Vagina (tissue), 2 donors: ENCODE measurements at regions of chr12 and their contacts with region 1.

Region 1: DNA sequence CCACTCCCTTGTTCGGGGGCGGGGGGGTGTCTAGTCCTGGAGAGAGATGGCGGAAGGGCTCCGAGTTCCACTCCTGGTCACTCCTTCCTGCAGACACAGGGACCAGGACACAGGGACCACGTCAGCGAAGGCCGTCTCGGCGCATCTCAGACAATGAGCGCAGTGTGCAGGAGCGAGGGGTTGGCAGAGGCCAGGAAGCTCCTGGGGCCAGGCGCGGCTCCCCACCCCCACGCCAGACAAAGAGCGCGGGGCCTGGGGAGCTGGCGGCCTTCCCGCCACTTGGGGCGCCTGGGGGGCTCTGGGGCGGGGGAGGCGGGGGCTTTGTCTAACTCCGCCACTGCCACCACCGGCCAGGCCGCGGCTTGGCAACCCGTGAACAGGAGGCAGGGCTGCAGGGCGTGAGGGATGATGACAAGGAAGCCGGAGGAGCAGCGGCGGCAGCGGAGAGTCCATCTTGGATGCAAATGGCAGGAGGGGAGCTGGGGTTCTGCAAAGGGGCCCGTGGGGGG is 2.2 kb downstream of the CDK2AP1 start:
- DNase-seq: no peak
- H3K4me3 ChIP-seq: peak overlapping the region; percentile 85 to 92
- H3K27ac ChIP-seq: peak overlapping the region; percentile 88
- H3K4me1 ChIP-seq: peaks cover 57% of the 10 kb centered on the region
- H3K27me3 ChIP-seq: no peaks in the 10 kb centered on the region
- CTCF ChIP-seq: no peak
- POLR2A ChIP-seq: no peak

Region 2: GRCh38 chr12:123388177-123388947 is 118.9 kb after region 1 on chr12:
- intact Hi-C with region 1: loop called (anchors 10 kb)
- DNase-seq: no peak
- H3K4me3 ChIP-seq: peak overlapping the region; percentile 49 to 63
- H3K27ac ChIP-seq: peak overlapping the region; percentile 74
- H3K4me1 ChIP-seq: peaks cover 63% of the 10 kb centered on the region
- H3K27me3 ChIP-seq: no peaks in the 10 kb centered on the region
- CTCF ChIP-seq: peak in 1 of 3 experiments; percentile 22
- POLR2A ChIP-seq: no peak

Region 3: GRCh38 chr12:123601602-123602489 is 332.4 kb after region 1 on chr12 and contains the start of gene DDX55:
- intact Hi-C with region 1: loop called (anchors 10 kb)
- DNase-seq: no peak
- H3K4me3 ChIP-seq: peak within 1 kb of the TSS; percentile 72 to 91
- H3K27ac ChIP-seq: peak within 1 kb of the TSS; percentile 73
- H3K4me1 ChIP-seq: peaks cover 29% of the 10 kb centered on the region
- H3K27me3 ChIP-seq: no peaks in the 10 kb centered on the region
- CTCF ChIP-seq: peak in 2 of 3 experiments; percentile 29 to 75
- POLR2A ChIP-seq: peak in 1 of 2 donors; percentile 5
- total RNA-seq, gene DDX55: 16.5 TPM